ENCODE measurements at regions of chr5 and their contacts with region 1.

Region 1: DNA sequence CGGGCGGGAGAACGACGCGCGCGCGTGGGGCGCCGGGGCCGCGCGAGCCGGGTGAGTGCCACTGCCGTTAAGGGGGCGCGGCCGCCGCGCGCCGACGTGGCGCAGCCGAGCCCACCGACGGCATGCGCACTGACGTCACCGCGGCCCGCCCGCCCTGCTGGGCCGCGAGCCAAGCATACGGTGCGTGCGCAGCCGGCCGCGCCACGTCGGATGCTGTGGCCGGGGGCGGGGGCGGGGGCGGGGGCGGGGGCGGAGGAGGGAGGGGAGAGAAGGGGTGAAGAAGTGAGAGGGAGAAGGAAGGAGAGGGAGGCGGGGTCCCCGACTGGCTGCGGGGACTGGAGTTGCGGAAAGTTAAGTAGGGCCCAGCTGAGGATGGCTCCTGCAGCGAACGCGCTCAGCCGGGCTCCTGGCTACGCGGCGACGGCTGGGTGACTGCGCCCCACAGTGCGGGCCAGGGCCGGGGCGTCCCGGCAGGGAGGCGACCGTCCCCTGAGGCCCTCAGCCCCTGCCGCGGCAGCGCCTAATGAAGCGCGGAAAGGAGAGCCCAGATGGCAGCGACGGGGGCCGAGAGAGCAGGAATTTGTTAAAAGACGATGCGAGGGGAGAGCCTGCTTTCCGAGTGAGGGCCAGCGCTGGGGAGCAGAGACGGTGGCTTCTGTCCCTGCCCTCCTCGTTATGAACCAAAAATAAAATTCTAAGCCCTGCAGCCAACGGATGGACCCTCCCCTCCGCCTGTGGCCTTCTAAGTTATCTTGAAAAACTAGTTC is at the start of gene DAP:
- DNase-seq: peak; percentile 85 to 94 (median 91)
- ATAC-seq: peak; percentile 65 to 94 (median 86)
- H3K4me3 ChIP-seq: peak within 1 kb of the TSS; percentile 59 to 95 (median 75)
- H3K27ac ChIP-seq: peak within 1 kb of the TSS; percentile 83 to 99 (median 95)
- H3K4me1 ChIP-seq: peaks cover 0 to 51% (median 29%) of the 10 kb centered on the region in 12 donors
- H3K27me3 ChIP-seq: no peaks in the 10 kb centered on the region
- CTCF ChIP-seq: no peak
- POLR2A ChIP-seq: peak in 1 of 2 donors; percentile 42
- total RNA-seq, gene DAP: 24.3 to 61.6 (median 28.5) TPM

Region 2: DNA sequence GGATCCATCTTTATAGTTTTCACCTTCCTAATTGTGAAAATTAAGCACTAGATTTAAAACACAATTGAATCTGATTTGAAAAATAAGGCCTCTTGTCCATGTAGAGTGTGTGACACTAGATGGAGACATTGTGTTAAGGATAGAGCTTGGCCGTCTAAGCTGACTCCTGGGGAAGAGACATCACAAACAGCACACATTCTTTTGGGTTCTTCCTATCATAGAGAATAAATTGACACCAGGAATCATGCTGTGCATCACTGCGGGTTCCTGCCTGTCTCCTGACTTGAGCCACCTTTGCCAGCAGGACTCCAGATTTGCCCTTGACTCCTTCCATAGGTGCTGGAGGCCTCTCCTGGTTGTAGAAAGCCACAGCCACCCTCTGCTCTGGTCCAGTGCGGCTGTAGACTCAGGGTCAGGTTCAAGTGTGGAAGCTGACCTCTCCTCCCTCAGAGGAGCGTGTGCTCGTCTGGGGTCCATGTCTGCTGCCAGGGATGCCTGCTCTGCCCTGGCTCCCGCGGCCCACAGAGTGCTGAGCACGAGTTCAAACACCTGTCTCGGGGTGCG is 308.5 kb before region 1 on chr5:
- intact Hi-C with region 1: loop called in 1 of 10 experiments (anchors 10 kb)
- DNase-seq: no peak
- ATAC-seq: peak; percentile 74 to 84 (median 82)
- H3K4me3 ChIP-seq: no peak overlapping the region
- H3K27ac ChIP-seq: no peak overlapping the region
- H3K4me1 ChIP-seq: peaks cover 3 to 25% (median 12%) of the 10 kb centered on the region in 12 donors
- H3K27me3 ChIP-seq: no peaks in the 10 kb centered on the region
- CTCF ChIP-seq: peak; percentile 63 to 90 (median 80)
- POLR2A ChIP-seq: no peak

Region 3: GRCh38 chr5:10724799-10725507 is 36.4 kb before region 1 on chr5:
- intact Hi-C with region 1: loop called in 2 of 10 experiments (anchors 2 kb)
- DNase-seq: peak; percentile 72 to 85 (median 76)
- ATAC-seq: peak; percentile 72 to 92 (median 88)
- H3K4me3 ChIP-seq: peak overlapping the region in 7 of 12 donors; percentile 8 to 29 (median 21)
- H3K27ac ChIP-seq: peak overlapping the region; percentile 63 to 88 (median 80)
- H3K4me1 ChIP-seq: peaks cover 0 to 53% (median 29%) of the 10 kb centered on the region in 12 donors
- H3K27me3 ChIP-seq: no peaks in the 10 kb centered on the region
- CTCF ChIP-seq: peak in 10 of 12 donors; percentile 13 to 62 (median 41)
- POLR2A ChIP-seq: no peak

Region 4: GRCh38 chr5:10801931-10802659 is 40.7 kb after region 1 on chr5:
- intact Hi-C with region 1: loop called in 1 of 10 experiments (anchors 1 kb)
- DNase-seq: no peak
- ATAC-seq: peak in 2 of 4 donors; percentile 53 to 67
- H3K4me3 ChIP-seq: no peak overlapping the region
- H3K27ac ChIP-seq: no peak overlapping the region
- H3K4me1 ChIP-seq: no peaks in the 10 kb centered on the region
- H3K27me3 ChIP-seq: peaks cover 0 to 4% (median 0%) of the 10 kb centered on the region in 9 donors
- CTCF ChIP-seq: peak in 8 of 12 donors; percentile 8 to 41 (median 24)
- POLR2A ChIP-seq: no peak

Region 5: GRCh38 chr5:10825897-10826644 is 64.7 kb after region 1 on chr5:
- intact Hi-C with region 1: no loop called
- DNase-seq: no peak
- ATAC-seq: no peak
- H3K4me3 ChIP-seq: no peak overlapping the region
- H3K27ac ChIP-seq: no peak overlapping the region
- H3K4me1 ChIP-seq: peaks cover 0 to 12% (median 0%) of the 10 kb centered on the region in 12 donors
- H3K27me3 ChIP-seq: peaks cover 0 to 4% (median 0%) of the 10 kb centered on the region in 9 donors
- CTCF ChIP-seq: no peak
- POLR2A ChIP-seq: no peak